IMR-90 (cell line): ENCODE measurements at regions of chr7 and their contacts with region 1.

Region 1: DNA sequence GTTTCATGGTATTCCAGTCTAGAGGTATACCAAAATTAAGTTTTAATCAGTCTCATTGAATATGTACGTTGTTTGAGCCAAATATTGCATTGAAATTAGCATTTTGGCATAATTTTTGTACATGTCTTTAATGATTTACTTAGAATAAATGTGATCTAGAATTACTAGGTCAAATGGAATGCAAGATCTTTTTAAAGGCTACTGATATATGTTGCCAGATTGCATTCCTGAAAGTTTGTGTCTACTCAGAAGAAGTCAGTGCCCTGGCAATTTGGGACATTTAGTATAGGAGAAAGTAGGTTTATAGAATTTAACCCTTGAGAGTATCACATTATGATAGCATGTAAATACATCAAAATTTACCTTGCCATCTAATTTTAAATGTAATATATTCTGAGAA is 32.4 kb downstream of the KMT2E start:
- DNase-seq: peak; percentile 75
- ATAC-seq: peak; percentile 82
- H3K4me3 ChIP-seq: no peak overlapping the region
- H3K27ac ChIP-seq: no peak overlapping the region
- H3K4me1 ChIP-seq: peaks cover 6% of the 10 kb centered on the region; the same call in 1 of the 2 replicates
- H3K27me3 ChIP-seq: no peaks in the 10 kb centered on the region
- CTCF ChIP-seq: no peak
- POLR2A ChIP-seq: no peak
- RAD21 ChIP-seq: no peak

Region 2: GRCh38 chr7:105088456-105088855 is 42.0 kb after region 1 on chr7:
- CTCF ChIA-PET with region 1: no interaction called
- POLR2A ChIA-PET with region 1: no interaction called
- dilution Hi-C with region 1: no loop called
- in situ Hi-C with region 1: no loop called
- intact Hi-C with region 1: loop called (anchors 5 kb)
- DNase-seq: no peak
- ATAC-seq: no peak
- H3K4me3 ChIP-seq: no peak overlapping the region
- H3K27ac ChIP-seq: no peak overlapping the region
- H3K4me1 ChIP-seq: no peaks in the 10 kb centered on the region
- H3K27me3 ChIP-seq: no peaks in the 10 kb centered on the region
- CTCF ChIP-seq: no peak
- POLR2A ChIP-seq: no peak
- RAD21 ChIP-seq: no peak